ENCODE measurements at regions of chr17 and their contacts with region 1.

Region 1: GRCh38 chr17:63773381-63774140 is at the start of gene CCDC47:
- DNase-seq: peak; percentile 98
- ATAC-seq: peak; percentile 86
- H3K4me3 Mint-ChIP-seq: peak within 1 kb of the TSS; percentile 88
- H3K27ac Mint-ChIP-seq: peak within 1 kb of the TSS; percentile 100
- H3K4me1 Mint-ChIP-seq: peaks cover 48% of the 10 kb centered on the region
- H3K27me3 Mint-ChIP-seq: no peaks in the 10 kb centered on the region
- CTCF ChIP-seq: no peak
- total RNA-seq, gene CCDC47: 63.0 to 64.4 TPM

Region 2: DNA sequence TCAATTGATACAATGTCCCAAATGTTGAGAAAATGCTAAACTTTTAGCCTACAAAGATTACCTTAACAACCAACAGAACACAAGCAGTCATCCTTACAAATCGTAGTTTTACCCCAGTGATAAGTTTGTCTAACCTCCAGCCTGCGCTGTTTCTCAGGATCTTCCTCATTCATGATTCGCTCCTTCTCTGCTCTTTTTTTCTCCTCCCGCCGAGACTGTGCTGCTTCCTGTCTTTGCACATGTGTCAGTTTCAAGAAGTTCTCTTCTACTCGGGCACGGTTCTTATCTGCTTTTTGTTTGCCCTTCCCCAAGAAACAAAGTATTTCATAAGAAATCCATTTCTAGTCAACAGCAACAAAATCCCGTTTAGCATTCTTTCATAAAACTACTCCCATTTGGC is 21.8 kb before region 1 on chr17:
- CTCF ChIA-PET with region 1: interaction called, 4 read pairs
- POLR2A ChIA-PET with region 1: interaction called, 10 read pairs
- intact Hi-C with region 1: no loop called
- DNase-seq: peak; percentile 43
- ATAC-seq: peak; percentile 73
- H3K4me3 Mint-ChIP-seq: peak overlapping the region; percentile 57
- H3K27ac Mint-ChIP-seq: peak overlapping the region; percentile 86
- H3K4me1 Mint-ChIP-seq: peaks cover 19% of the 10 kb centered on the region
- H3K27me3 Mint-ChIP-seq: no peaks in the 10 kb centered on the region
- CTCF ChIP-seq: no peak

Region 3: GRCh38 chr17:63819585-63820537 is 46.3 kb after region 1 on chr17:
- CTCF ChIA-PET with region 1: interaction called, 3 read pairs
- POLR2A ChIA-PET with region 1: interaction called, 42 read pairs
- intact Hi-C with region 1: loop called (anchors 5 kb)
- DNase-seq: peak; percentile 34
- ATAC-seq: peak; percentile 34
- H3K4me3 Mint-ChIP-seq: peak overlapping the region; percentile 33
- H3K27ac Mint-ChIP-seq: peak overlapping the region; percentile 87
- H3K4me1 Mint-ChIP-seq: peaks cover 32% of the 10 kb centered on the region
- H3K27me3 Mint-ChIP-seq: no peaks in the 10 kb centered on the region
- CTCF ChIP-seq: no peak

Region 4: DNA sequence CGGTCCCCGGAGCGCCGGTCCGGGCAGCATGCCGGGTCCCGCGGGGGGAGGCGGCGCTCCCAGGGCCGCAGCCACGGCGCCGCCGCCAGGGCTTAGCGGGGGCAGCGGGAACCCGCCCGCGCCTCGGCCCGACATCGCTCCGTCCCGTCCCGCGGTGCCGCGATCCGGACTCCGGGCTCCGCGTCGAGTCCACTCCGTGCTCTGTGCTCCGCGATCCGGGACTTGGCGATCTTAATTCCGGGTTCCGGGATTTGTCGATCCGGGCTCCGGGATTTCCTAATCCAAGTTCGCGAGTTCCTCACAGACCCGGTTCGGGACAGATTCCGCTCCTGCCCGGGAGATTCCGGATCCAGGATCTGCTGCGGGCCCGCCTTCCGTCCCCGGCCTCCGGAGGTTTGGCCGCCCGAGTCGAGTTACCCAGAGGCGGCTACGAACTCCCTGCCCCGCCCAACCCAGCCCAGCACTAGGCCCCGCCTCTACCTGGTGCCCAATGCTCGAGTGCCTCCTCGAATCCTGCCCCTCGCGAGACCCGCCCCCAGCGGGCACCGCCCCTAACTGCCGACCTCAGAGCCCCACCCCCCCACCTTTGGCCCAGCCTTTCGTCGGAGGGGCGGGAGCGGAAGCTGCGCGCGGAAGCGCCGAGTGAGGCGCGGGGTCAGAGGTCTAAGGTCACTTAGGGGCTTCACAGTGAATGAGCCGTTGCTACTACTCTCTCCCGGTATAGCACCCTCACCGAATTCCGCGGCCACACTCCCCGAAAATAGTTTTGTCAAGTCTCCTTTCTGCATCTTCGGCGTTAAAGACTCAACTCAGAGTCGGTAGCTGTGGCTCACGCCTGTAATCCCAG is 69.2 kb after region 1 on chr17 and contains the start of gene SMARCD2:
- CTCF ChIA-PET with region 1: interaction called, 4 read pairs
- POLR2A ChIA-PET with region 1: interaction called, 12 read pairs
- intact Hi-C with region 1: no loop called
- DNase-seq: peak; percentile 99
- ATAC-seq: peak; percentile 92
- H3K4me3 Mint-ChIP-seq: peak within 1 kb of the TSS; percentile 98
- H3K27ac Mint-ChIP-seq: peak within 1 kb of the TSS; percentile 95
- H3K4me1 Mint-ChIP-seq: peaks cover 23% of the 10 kb centered on the region
- H3K27me3 Mint-ChIP-seq: no peaks in the 10 kb centered on the region
- CTCF ChIP-seq: no peak
- total RNA-seq, gene SMARCD2: 99.4 to 103 TPM